ENCODE measurements at regions of chr15 and their contacts with region 1.

Region 1: GRCh38 chr15:68704496-68705021 is 116.1 kb downstream of the ANP32A start:
- DNase-seq: peak; percentile 18
- H3K4me3 Mint-ChIP-seq: no peak overlapping the region
- H3K27ac Mint-ChIP-seq: no peak overlapping the region
- H3K4me1 Mint-ChIP-seq: no peaks in the 10 kb centered on the region
- H3K27me3 Mint-ChIP-seq: peaks cover 52% of the 10 kb centered on the region
- CTCF ChIP-seq: no peak

Region 2: GRCh38 chr15:67228286-67228685 is 1476.3 kb before region 1 on chr15:
- CTCF ChIA-PET with region 1: no interaction called
- intact Hi-C with region 1: no loop called
- DNase-seq: no peak
- H3K4me3 Mint-ChIP-seq: no peak overlapping the region
- H3K27ac Mint-ChIP-seq: no peak overlapping the region
- H3K4me1 Mint-ChIP-seq: peaks cover 12% of the 10 kb centered on the region
- H3K27me3 Mint-ChIP-seq: no peaks in the 10 kb centered on the region
- CTCF ChIP-seq: no peak

Region 3: DNA sequence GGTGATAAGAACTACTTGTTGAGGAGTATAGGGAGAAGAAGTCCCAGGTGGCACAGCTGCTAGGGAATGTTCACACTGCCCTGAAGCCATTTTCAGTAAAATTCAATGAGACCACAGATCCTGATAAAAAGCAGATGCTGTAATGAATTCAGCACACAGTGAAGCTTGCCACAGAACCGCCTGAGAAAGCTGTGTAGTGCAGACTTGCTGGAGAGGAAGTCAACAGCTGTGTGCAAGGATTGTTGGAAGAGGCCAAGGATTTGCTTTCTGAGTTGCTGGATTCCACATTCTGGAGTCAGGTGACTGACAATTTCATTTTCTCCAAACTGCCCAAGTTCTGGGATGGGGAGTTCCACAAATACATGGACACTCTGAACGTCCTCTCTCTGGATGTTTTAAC is 45.2 kb after region 1 on chr15:
- CTCF ChIA-PET with region 1: no interaction called
- intact Hi-C with region 1: no loop called
- DNase-seq: no peak
- H3K4me3 Mint-ChIP-seq: no peak overlapping the region
- H3K27ac Mint-ChIP-seq: no peak overlapping the region
- H3K4me1 Mint-ChIP-seq: peaks cover 4% of the 10 kb centered on the region
- H3K27me3 Mint-ChIP-seq: peaks cover 29% of the 10 kb centered on the region
- CTCF ChIP-seq: no peak

Region 4: DNA sequence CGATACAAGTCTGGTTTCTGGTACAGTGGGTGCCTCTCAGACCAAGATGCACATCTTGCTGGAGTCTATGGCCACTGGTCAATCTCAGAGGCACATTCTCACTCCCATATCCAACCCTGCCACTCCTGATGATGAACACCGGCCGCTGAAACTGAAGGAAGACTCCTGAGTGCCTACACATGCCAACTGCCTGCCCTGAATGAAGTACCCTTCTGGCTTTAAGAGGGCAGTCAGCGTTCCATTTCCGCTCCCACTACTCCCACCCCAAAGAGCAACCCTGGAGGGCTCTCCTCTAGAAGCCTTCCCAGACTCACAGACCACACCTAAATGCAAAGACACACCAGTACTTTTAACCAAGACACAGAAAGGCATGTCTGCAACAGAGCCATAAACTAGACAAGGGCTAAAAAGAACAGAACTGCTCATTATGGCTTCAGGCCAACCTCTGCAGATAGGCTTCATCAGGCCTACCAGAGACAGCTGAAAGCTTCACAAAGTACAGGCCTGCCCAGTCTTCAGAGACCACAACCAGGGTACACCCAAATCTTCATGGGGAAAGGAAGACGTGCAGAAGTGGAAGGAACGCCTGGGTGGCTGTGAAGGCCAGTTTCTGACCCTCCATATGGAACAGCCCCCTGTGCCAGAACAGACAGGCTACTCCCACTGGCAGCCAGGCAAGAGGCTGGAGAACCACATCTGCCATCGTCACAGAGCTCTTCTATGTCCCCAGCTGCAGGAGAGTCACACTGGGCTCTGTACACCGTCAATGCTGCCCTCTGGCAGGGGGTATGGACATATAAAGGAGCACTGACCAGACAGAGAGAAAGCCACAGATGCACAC is 101.9 kb after region 1 on chr15:
- CTCF ChIA-PET with region 1: no interaction called
- intact Hi-C with region 1: no loop called
- DNase-seq: no peak
- H3K4me3 Mint-ChIP-seq: no peak overlapping the region
- H3K27ac Mint-ChIP-seq: peak overlapping the region; percentile 19
- H3K4me1 Mint-ChIP-seq: peaks cover 65% of the 10 kb centered on the region
- H3K27me3 Mint-ChIP-seq: no peaks in the 10 kb centered on the region
- CTCF ChIP-seq: no peak

Region 5: GRCh38 chr15:68862415-68862814 is 157.9 kb after region 1 on chr15:
- CTCF ChIA-PET with region 1: interaction called, 10 read pairs
- intact Hi-C with region 1: no loop called
- DNase-seq: no peak
- H3K4me3 Mint-ChIP-seq: no peak overlapping the region
- H3K27ac Mint-ChIP-seq: no peak overlapping the region
- H3K4me1 Mint-ChIP-seq: no peaks in the 10 kb centered on the region
- H3K27me3 Mint-ChIP-seq: peaks cover 33% of the 10 kb centered on the region
- CTCF ChIP-seq: no peak

Measured in Calu3 (cell line).